ENCODE measurements at regions of chr1 and their contacts with region 1.

Region 1: DNA sequence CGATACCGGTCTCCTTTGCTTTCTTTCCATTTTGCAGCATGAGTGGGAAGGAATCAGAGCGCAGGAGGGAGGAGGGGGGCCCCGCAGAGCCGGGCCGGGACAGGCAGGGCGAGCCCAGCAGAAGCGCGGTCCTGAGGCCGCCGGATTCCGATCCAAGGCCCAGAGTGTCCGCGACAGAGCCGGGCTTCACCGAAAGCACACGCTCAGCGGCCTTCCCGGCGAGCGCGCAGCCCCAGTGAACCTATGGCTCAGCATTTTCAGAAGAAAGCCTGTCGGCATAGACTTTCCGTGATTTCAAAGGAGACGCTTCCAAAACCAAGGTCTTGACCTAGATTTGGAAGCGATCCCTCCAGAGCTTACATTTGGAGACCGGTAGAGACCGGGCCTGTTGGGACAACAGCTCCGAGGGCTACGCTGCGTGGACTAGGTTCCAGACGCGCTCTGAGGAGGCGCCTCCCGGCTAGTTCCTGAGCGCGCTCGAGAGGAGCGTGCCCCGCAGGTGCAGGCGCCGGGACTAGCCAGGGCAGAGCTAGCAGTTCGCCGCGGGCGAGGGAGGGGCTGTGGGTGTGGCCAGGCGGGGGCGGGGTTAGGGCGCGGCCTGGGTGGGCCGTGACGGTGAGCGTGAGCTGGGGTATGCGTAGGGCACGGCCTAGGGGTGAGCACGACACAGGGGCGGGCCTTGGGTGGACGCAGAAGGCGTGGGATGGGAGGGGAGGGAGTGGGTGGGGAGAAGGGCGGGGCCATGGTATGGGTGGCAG is 27.8 kb upstream of the PRSS38 start:
- DNase-seq: peak; percentile 100
- ATAC-seq: peak; percentile 84
- H3K4me3 ChIP-seq: peak overlapping the region; percentile 67
- H3K27ac ChIP-seq: no peak overlapping the region
- H3K4me1 ChIP-seq: peaks cover 18% of the 10 kb centered on the region
- H3K27me3 ChIP-seq: no peaks in the 10 kb centered on the region
- CTCF ChIP-seq: no peak

Region 2: GRCh38 chr1:227734856-227735538 is 52.7 kb before region 1 on chr1 and contains the starts of genes JMJD4 and SNAP47:
- CTCF ChIA-PET with region 1: no interaction called
- POLR2A ChIA-PET with region 1: interaction called, 24 read pairs
- intact Hi-C with region 1: loop called (anchors 2 kb)
- DNase-seq: peak; percentile 99
- ATAC-seq: peak; percentile 89
- H3K4me3 ChIP-seq: peak within 1 kb of the TSS; percentile 80
- H3K27ac ChIP-seq: peak within 1 kb of the TSS; percentile 22
- H3K4me1 ChIP-seq: peaks cover 22% of the 10 kb centered on the region
- H3K27me3 ChIP-seq: no peaks in the 10 kb centered on the region
- CTCF ChIP-seq: no peak
- total RNA-seq, gene JMJD4: 80.5 and 87.8 TPM in 2 replicates
- total RNA-seq, gene SNAP47: 123 and 145 TPM in 2 replicates

Region 3: GRCh38 chr1:227934476-227935313 is 147.0 kb after region 1 on chr1:
- CTCF ChIA-PET with region 1: no interaction called
- POLR2A ChIA-PET with region 1: no interaction called
- intact Hi-C with region 1: loop called (anchors 1 kb)
- DNase-seq: peak; percentile 100
- ATAC-seq: peak; percentile 87
- H3K4me3 ChIP-seq: peak overlapping the region; percentile 25
- H3K27ac ChIP-seq: peak overlapping the region; percentile 94
- H3K4me1 ChIP-seq: peaks cover 49% of the 10 kb centered on the region
- H3K27me3 ChIP-seq: no peaks in the 10 kb centered on the region
- CTCF ChIP-seq: no peak

Measured in PC-3 (cell line).